CD4-positive, alpha-beta memory T cell (primary cell): ENCODE measurements at regions of chr14 and their contacts with region 1.

Region 1: DNA sequence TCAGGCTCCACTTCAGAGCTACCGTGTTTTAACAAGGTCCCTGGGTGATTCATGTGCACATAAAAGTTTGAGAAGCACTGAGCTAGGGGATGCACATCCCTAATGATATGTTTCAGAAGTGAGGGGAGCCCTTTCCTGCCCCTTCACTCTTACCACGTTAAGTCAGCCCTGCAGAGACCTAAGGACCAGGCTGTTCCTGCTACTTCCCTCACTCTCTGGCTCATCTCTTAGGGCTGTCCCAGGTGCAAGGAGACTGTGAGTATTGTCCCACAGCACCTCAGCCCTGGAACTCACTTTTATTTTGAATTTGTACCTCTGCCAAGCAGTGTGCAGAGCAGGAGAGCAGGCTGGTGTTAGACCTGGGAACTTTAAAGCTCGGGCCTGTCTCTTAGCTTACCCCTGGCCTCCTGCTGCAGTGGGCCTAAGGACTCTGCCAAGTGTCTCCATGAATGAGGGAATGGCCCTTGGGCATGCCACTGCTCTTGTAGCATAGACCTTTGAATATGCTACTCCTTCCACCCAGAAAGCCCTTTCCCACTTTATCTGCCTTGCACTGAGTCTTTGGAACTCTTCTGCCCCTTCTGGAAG is 11.0 kb upstream of the SUSD6 start:
- DNase-seq: no peak
- H3K4me3 ChIP-seq: no peak overlapping the region
- H3K4me3 Mint-ChIP-seq: no peak overlapping the region
- H3K27ac ChIP-seq: no peak overlapping the region
- H3K27ac Mint-ChIP-seq: no peak overlapping the region
- H3K4me1 ChIP-seq: no peaks in the 10 kb centered on the region
- H3K4me1 Mint-ChIP-seq: peaks cover 0 to 7% (median 0%) of the 10 kb centered on the region in 4 donors
- H3K27me3 ChIP-seq: no peaks in the 10 kb centered on the region
- H3K27me3 Mint-ChIP-seq: no peaks in the 10 kb centered on the region

Region 2: GRCh38 chr14:69567562-69567961 is 32.8 kb before region 1 on chr14:
- CTCF ChIA-PET with region 1: no interaction called
- POLR2A ChIA-PET with region 1: no interaction called
- intact Hi-C with region 1: no loop called
- DNase-seq: no peak
- H3K4me3 ChIP-seq: no peak overlapping the region
- H3K4me3 Mint-ChIP-seq: no peak overlapping the region
- H3K27ac ChIP-seq: no peak overlapping the region
- H3K27ac Mint-ChIP-seq: no peak overlapping the region
- H3K4me1 ChIP-seq: no peaks in the 10 kb centered on the region
- H3K4me1 Mint-ChIP-seq: peaks cover 0 to 12% (median under 1%) of the 10 kb centered on the region in 4 donors
- H3K27me3 ChIP-seq: peaks cover 13% of the 10 kb centered on the region
- H3K27me3 Mint-ChIP-seq: peaks cover 33 to 51% of the 10 kb centered on the region in 2 donors

Region 3: DNA sequence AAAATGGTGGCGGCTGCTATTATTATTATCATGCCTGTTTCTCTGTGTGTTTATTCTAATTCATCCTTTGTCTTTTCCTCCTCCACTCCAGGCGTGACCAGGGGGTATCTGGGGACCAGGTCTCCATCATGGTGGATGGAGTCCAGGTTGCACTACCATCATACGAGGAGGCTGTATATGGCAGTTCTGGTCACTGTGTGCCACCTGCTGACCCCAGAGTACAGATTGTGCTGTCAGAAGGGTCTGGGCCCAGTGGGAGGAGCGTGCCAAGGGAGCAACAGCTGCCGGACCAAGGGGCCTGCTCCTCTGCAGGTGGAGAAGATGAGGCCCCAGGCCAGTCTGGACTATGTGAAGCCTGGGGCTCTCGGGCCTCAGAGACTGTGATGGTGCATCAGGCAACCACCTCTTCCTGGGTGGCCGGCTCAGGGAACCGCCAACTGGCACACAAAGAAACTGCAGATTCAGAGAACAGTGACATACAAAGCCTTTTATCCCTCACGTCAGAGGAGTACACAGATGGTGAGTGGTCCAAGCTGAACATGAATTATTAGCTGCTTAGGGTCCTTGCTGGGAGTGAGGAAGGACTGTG is 108.3 kb after region 1 on chr14:
- CTCF ChIA-PET with region 1: interaction called, 30 read pairs
- POLR2A ChIA-PET with region 1: no interaction called
- intact Hi-C with region 1: loop called (anchors 5 kb)
- DNase-seq: peak in 3 of 5 donors; percentile 24 to 41 (median 28)
- H3K4me3 ChIP-seq: no peak overlapping the region
- H3K4me3 Mint-ChIP-seq: no peak overlapping the region
- H3K27ac ChIP-seq: no peak overlapping the region
- H3K27ac Mint-ChIP-seq: peak overlapping the region in 4 of 7 donors; percentile 35 to 87 (median 54)
- H3K4me1 ChIP-seq: peaks cover 17% of the 10 kb centered on the region
- H3K4me1 Mint-ChIP-seq: peaks cover 25 to 58% (median 31%) of the 10 kb centered on the region in 4 donors
- H3K27me3 ChIP-seq: no peaks in the 10 kb centered on the region
- H3K27me3 Mint-ChIP-seq: no peaks in the 10 kb centered on the region

Region 4: GRCh38 chr14:70027785-70028428 is 427.5 kb after region 1 on chr14:
- CTCF ChIA-PET with region 1: no interaction called
- POLR2A ChIA-PET with region 1: no interaction called
- intact Hi-C with region 1: loop called (anchors 5 kb)
- DNase-seq: peak in 4 of 5 donors; percentile 14 to 47 (median 22)
- H3K4me3 ChIP-seq: no peak overlapping the region
- H3K4me3 Mint-ChIP-seq: no peak overlapping the region
- H3K27ac ChIP-seq: no peak overlapping the region
- H3K27ac Mint-ChIP-seq: no peak overlapping the region
- H3K4me1 ChIP-seq: no peaks in the 10 kb centered on the region
- H3K4me1 Mint-ChIP-seq: peaks cover 0 to 4% (median under 1%) of the 10 kb centered on the region in 4 donors
- H3K27me3 ChIP-seq: no peaks in the 10 kb centered on the region
- H3K27me3 Mint-ChIP-seq: peaks cover 2 to 15% of the 10 kb centered on the region in 2 donors